Activated CD4-positive, alpha-beta T cell treated with anti-CD3 and anti-CD28 coated beads for 36 hours (primary cell): ENCODE measurements at regions of chr7 and their contacts with region 1.

Region 1: GRCh38 chr7:44240983-44241510 is 40.3 kb downstream of the YKT6 start:
- DNase-seq: peak; percentile 81
- ATAC-seq: peak; percentile 95
- H3K4me3 Mint-ChIP-seq: no peak overlapping the region
- H3K27ac Mint-ChIP-seq: peak overlapping the region; percentile 51
- H3K4me1 Mint-ChIP-seq: no peaks in the 10 kb centered on the region
- H3K27me3 Mint-ChIP-seq: no peaks in the 10 kb centered on the region

Region 2: GRCh38 chr7:44196450-44196872 is 44.6 kb before region 1 on chr7:
- CTCF ChIA-PET with region 1: no interaction called
- POLR2A ChIA-PET with region 1: no interaction called
- intact Hi-C with region 1: no loop called
- DNase-seq: peak; percentile 54
- ATAC-seq: no peak
- H3K4me3 Mint-ChIP-seq: no peak overlapping the region
- H3K27ac Mint-ChIP-seq: no peak overlapping the region
- H3K4me1 Mint-ChIP-seq: peaks cover 9% of the 10 kb centered on the region
- H3K27me3 Mint-ChIP-seq: peaks cover 6% of the 10 kb centered on the region

Region 3: DNA sequence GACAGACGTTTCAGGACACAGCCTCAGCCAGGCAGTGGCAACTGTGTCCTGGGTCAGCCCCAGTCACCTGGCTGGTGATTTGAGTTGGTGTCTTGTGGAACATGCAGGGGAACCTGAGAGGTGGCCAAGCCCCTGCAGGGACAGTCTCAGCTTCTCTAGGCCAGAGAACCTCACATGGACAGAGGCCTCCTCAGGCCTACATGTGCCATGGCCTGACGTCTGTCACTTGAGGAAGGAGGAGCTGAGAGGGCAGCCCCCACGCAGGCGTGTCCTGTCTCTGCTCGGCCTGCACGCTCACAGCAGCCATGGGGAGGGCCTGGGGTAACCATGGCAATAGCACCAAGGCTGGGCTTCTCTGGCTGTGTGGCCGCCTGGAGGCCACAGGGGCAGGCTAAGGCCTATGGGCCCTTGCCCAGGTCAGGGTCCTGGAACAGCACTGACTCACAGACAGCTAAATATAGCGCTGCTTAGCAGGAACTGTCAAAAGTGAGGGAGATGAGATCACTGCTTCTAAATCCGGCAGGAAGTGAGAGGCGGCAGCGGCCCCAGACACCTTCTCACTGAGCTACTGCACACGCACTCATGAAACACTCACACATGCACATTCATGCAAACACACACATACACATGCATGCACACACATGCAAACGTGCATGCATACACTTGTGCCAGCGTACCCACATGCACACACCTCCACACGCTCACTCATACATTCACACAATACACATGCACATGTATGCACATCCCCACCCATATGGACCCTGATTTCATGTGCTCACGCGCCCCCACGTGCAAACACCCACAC is 16.8 kb after region 1 on chr7:
- CTCF ChIA-PET with region 1: interaction called, 13 read pairs
- POLR2A ChIA-PET with region 1: no interaction called
- intact Hi-C with region 1: no loop called
- DNase-seq: peak; percentile 90
- ATAC-seq: peak; percentile 91
- H3K4me3 Mint-ChIP-seq: peak overlapping the region; percentile 30
- H3K27ac Mint-ChIP-seq: peak overlapping the region; percentile 90
- H3K4me1 Mint-ChIP-seq: peaks cover 46% of the 10 kb centered on the region
- H3K27me3 Mint-ChIP-seq: no peaks in the 10 kb centered on the region

Region 4: DNA sequence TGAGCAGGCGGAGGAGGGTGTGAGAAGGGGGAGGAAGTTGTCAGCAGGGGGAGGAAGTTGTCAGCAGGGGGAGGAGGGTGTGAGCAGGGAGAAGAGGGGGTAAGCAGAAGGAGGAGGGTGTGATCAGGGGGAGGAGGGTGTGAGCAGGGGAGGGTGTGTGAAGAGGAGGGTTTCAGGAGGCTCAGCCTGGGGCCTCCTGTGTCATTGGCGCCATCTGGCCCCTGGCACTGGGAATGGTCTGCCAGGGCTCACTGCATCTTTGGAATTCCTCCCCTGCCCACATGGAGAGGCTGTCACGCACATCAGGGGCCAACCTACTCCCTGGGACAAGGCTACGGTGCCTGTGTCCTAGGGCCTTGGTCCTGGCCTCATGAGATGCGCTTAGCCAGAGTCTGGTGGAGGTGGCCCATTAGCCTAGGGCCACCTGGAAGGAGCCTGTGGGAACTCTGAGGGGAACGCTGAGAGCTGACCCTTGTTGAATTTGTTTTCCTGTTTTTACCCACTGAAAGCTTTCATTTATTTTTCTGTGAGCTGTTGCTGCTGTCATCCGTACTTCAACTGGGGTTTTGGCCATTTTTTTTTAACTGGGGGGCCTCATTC is 66.4 kb after region 1 on chr7:
- CTCF ChIA-PET with region 1: interaction called, 8 read pairs
- POLR2A ChIA-PET with region 1: no interaction called
- intact Hi-C with region 1: loop called (anchors 1 kb)
- DNase-seq: peak; percentile 61
- ATAC-seq: peak; percentile 60
- H3K4me3 Mint-ChIP-seq: no peak overlapping the region
- H3K27ac Mint-ChIP-seq: no peak overlapping the region
- H3K4me1 Mint-ChIP-seq: peaks cover 3% of the 10 kb centered on the region
- H3K27me3 Mint-ChIP-seq: peaks cover 9% of the 10 kb centered on the region